Aorta (tissue), 5 donors: ENCODE measurements at regions of chr18 and their contacts with region 1.

Region 1: DNA sequence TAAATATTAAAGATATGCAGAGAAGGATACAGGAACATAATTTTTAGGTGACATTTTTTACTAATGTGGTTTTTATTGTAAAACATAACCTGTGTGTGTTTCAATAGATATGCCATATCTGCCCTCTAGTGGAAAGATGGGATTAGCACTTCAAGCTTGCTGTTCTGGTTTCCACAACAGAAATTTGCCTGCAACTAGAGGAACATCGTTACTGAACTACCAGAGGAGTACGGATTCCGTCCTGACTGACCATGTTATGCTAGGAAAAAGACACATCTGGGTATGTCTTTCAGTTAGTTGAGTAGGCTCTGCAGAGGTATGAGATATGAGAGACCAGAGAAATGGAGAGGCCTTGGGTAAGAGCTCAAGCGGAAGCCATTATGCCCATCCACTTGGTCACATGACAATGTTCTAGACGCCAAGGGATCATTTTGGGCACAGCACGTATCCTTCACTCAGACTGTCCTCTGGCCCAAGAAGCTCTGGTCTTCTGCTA is 104.9 kb downstream of the MBD2 start:
- DNase-seq: no peak
- ATAC-seq: peak; percentile 77
- H3K4me3 ChIP-seq: no peak overlapping the region
- H3K27ac ChIP-seq: no peak overlapping the region
- H3K4me1 ChIP-seq: no peaks in the 10 kb centered on the region
- H3K27me3 ChIP-seq: no peaks in the 10 kb centered on the region

Region 2: DNA sequence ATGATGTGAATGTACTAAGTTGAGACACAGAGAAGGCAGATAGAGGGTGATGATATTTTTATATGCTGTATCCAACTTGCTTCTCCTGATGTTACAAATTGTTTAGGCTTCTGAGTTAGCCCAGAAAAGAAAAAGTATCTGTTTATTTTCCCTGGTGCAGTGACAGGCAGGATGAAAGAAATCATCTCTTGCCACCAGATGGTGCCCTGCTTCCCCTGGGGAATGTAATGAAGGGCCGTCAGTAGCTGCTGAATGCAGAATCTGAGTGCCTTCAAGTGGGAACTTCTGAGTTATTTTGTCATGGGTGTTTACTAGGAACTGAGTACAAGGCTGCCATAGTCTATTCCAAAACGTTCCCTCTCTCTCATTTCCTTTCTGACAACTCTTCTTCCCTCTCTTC is 420.7 kb before region 1 on chr18:
- intact Hi-C with region 1: loop called in 1 of 2 experiments (anchors 10 kb)
- DNase-seq: no peak
- ATAC-seq: no peak
- H3K4me3 ChIP-seq: no peak overlapping the region
- H3K27ac ChIP-seq: no peak overlapping the region
- H3K4me1 ChIP-seq: no peaks in the 10 kb centered on the region
- H3K27me3 ChIP-seq: no peaks in the 10 kb centered on the region

Region 3: DNA sequence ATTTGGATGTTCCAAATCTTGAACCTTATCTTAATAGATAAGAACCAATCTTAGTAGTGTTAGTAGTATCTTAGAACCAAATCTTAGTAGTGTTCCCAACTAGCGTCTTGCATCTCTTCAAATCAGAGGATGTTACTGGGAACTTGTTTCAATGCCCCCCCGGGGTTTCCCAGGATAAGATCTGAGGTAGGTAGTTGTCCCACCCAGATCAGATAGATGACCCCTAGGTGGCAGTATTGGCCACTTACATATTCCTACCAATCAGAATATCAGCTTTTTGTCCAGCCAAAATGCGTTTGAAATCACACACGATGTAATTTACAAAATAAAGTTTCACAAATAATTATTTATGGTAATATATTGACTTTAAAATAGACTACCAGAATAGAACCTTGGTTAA is 209.9 kb before region 1 on chr18:
- intact Hi-C with region 1: loop called in 1 of 2 experiments (anchors 10 kb)
- DNase-seq: no peak
- ATAC-seq: no peak
- H3K4me3 ChIP-seq: no peak overlapping the region
- H3K27ac ChIP-seq: no peak overlapping the region
- H3K4me1 ChIP-seq: no peaks in the 10 kb centered on the region
- H3K27me3 ChIP-seq: no peaks in the 10 kb centered on the region

Region 4: DNA sequence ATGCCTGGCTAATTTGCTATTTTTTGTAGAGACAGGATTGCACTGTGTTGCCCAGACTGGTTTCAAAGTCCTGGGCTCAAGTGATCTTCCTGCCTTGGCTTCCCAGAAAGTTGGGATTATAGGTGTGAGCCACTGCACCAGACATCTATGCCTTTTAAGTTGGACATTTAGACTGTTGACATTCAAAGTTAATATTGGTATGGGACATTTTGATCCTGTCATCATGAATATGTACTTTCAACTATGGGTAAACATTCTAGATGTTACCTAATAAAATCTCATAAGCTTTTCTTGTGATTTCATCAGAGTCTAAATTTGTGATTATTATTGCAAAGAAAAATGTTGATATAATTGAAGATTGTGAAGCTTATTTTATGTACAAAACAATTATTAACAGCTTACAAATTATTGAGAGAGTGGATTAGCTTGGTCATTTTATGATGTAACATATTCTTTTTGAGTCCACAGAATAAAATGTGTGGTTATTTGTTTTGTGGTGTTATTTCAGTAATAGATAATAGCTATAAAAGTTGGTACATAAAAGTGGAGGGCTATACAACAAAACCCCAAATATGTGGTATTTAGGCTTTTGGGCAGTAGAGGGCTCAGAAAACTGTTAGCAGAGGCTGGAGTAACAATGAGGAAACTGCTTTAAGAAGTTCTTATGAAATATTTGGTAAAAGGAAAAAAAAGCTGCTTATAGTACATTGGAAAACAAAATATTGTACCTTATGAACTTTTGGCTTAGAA is 196.7 kb after region 1 on chr18:
- intact Hi-C with region 1: no loop called
- DNase-seq: no peak
- ATAC-seq: no peak
- H3K4me3 ChIP-seq: no peak overlapping the region
- H3K27ac ChIP-seq: no peak overlapping the region
- H3K4me1 ChIP-seq: no peaks in the 10 kb centered on the region
- H3K27me3 ChIP-seq: no peaks in the 10 kb centered on the region